CD8-positive, alpha-beta T cell (primary cell): ENCODE measurements at regions of chr1 and their contacts with region 1.

Region 1: DNA sequence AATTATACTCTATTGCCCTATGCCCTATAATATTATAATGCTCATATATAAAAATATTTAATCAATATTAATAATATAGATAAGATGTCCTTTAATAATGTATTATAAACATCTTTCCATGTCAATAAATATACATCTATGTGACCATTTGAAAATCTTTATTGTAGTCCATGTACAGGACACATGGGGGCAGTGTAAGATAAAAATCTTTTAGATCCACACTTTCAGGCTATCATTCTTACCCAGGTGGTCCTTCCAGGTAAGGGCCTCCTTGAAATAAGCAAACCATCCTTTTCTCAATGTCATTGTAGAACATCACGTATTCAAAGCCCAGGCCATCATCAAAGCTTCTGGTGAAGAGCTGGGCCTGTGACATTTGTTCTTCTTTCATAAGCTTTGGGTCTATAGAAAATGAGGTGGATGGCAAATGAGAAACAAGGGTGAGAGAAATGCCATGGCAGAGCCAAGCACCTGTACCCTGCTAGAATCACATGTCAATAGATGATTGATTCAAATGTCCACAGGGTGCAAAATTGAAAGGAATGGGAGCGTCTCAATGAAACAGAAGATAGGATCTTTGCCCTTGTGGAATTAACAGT is 20.2 kb downstream of the THEM4 start:
- DNase-seq: peak in 2 of 9 experiments; percentile 48 to 58
- ATAC-seq: peak; percentile 69
- H3K4me3 ChIP-seq: no peak overlapping the region
- H3K4me3 Mint-ChIP-seq: no peak overlapping the region
- H3K27ac ChIP-seq: no peak overlapping the region
- H3K27ac Mint-ChIP-seq: peak overlapping the region; percentile 19
- H3K4me1 ChIP-seq: peaks cover 13% of the 10 kb centered on the region
- H3K4me1 Mint-ChIP-seq: peaks cover 24% of the 10 kb centered on the region
- H3K27me3 ChIP-seq: no peaks in the 10 kb centered on the region
- H3K27me3 Mint-ChIP-seq: no peaks in the 10 kb centered on the region
- CTCF ChIP-seq: peak; percentile 53

Region 2: DNA sequence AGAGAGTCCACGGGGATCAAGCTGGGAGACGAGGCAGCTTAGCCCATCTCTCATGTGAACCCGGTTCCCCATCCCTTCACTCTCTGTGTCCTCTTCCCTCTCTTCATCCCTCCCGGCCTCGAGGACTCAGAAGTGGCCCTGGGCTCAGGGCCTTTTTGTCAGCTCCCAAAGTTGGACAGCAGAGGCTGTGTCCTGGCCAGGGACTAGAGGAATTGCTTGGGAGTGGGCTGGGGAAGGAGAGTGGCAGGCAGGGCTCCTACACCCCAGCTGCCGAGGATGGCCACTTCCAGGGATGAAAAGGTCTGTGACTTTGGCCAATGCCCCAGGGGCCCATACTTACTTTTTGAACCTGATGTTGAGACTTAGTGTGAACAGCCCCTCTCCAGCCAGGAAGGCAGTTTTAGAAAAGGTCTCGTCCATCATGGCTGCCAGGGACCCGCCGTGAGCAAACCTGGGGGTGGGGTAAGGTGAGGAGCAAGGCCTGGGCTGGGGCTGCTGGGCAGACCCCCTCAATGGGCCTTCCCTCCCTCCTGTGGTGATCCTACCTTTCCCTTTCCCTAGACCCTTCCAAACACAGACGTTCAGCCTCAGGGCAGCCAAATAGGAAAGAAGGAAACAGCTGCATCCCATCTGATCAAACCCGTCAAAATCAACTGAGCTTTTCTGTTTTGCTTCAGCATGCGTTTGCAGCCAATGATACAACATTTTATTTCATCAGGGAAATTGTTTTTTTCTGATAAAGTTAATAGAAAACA is 41.1 kb before region 1 on chr1:
- CTCF ChIA-PET with region 1: no interaction called
- POLR2A ChIA-PET with region 1: no interaction called
- intact Hi-C with region 1: no loop called
- DNase-seq: no peak
- ATAC-seq: no peak
- H3K4me3 ChIP-seq: no peak overlapping the region
- H3K4me3 Mint-ChIP-seq: no peak overlapping the region
- H3K27ac ChIP-seq: no peak overlapping the region
- H3K27ac Mint-ChIP-seq: no peak overlapping the region
- H3K4me1 ChIP-seq: no peaks in the 10 kb centered on the region
- H3K4me1 Mint-ChIP-seq: peaks cover 13% of the 10 kb centered on the region
- H3K27me3 ChIP-seq: no peaks in the 10 kb centered on the region
- H3K27me3 Mint-ChIP-seq: no peaks in the 10 kb centered on the region
- CTCF ChIP-seq: no peak

Region 3: DNA sequence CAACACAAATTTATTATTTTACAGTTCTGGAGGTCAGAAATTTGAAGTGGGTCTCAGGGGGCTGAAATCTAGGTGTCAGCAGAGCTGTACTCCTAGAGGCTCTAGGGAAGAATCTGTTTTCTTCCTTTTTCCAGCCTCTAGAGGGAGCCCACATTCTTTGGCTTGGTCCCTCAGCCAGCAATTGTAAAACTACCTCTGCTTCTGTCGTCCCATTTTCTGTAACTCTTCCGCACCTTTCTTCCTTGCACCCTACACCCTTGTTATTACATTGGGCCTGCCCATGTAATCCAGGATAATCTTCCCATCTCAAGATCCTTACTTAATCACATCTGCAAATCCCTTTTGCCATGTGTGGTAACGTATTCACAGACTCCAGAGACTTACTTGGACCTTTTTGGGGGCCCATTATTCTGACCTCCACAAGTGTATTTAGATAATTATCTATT is 45.0 kb after region 1 on chr1:
- CTCF ChIA-PET with region 1: interaction called, 9 read pairs
- POLR2A ChIA-PET with region 1: no interaction called
- intact Hi-C with region 1: loop called (anchors 1 to 2 kb)
- DNase-seq: peak; percentile 10 to 81 (median 38)
- ATAC-seq: peak; percentile 78
- H3K4me3 ChIP-seq: no peak overlapping the region
- H3K4me3 Mint-ChIP-seq: no peak overlapping the region
- H3K27ac ChIP-seq: no peak overlapping the region
- H3K27ac Mint-ChIP-seq: no peak overlapping the region
- H3K4me1 ChIP-seq: peaks cover 3% of the 10 kb centered on the region
- H3K4me1 Mint-ChIP-seq: peaks cover 2% of the 10 kb centered on the region
- H3K27me3 ChIP-seq: no peaks in the 10 kb centered on the region
- H3K27me3 Mint-ChIP-seq: no peaks in the 10 kb centered on the region
- CTCF ChIP-seq: peak; percentile 83

Region 4: GRCh38 chr1:151956957-151957497 is 68.0 kb after region 1 on chr1:
- CTCF ChIA-PET with region 1: no interaction called
- POLR2A ChIA-PET with region 1: no interaction called
- intact Hi-C with region 1: no loop called
- DNase-seq: no peak
- ATAC-seq: no peak
- H3K4me3 ChIP-seq: no peak overlapping the region
- H3K4me3 Mint-ChIP-seq: no peak overlapping the region
- H3K27ac ChIP-seq: no peak overlapping the region
- H3K27ac Mint-ChIP-seq: no peak overlapping the region
- H3K4me1 ChIP-seq: no peaks in the 10 kb centered on the region
- H3K4me1 Mint-ChIP-seq: peaks cover 5% of the 10 kb centered on the region
- H3K27me3 ChIP-seq: no peaks in the 10 kb centered on the region
- H3K27me3 Mint-ChIP-seq: no peaks in the 10 kb centered on the region
- CTCF ChIP-seq: no peak

Region 5: GRCh38 chr1:151993654-151994496 is 104.8 kb after region 1 on chr1 and contains the start of gene S100A10:
- CTCF ChIA-PET with region 1: interaction called, 68 read pairs
- POLR2A ChIA-PET with region 1: no interaction called
- intact Hi-C with region 1: loop called (anchors 1 kb)
- DNase-seq: peak; percentile 58 to 92 (median 82)
- ATAC-seq: peak; percentile 86
- H3K4me3 ChIP-seq: peak within 1 kb of the TSS; percentile 78 to 94
- H3K4me3 Mint-ChIP-seq: peak within 1 kb of the TSS; percentile 98
- H3K27ac ChIP-seq: peak within 1 kb of the TSS; percentile 82 to 91
- H3K27ac Mint-ChIP-seq: peak within 1 kb of the TSS; percentile 97
- H3K4me1 ChIP-seq: peaks cover 48% of the 10 kb centered on the region
- H3K4me1 Mint-ChIP-seq: peaks cover 50% of the 10 kb centered on the region
- H3K27me3 ChIP-seq: no peaks in the 10 kb centered on the region
- H3K27me3 Mint-ChIP-seq: no peaks in the 10 kb centered on the region
- CTCF ChIP-seq: no peak
- total RNA-seq, gene S100A10: 132 to 138 TPM